ENCODE measurements at regions of chr12 and their contacts with region 1.

Region 1: DNA sequence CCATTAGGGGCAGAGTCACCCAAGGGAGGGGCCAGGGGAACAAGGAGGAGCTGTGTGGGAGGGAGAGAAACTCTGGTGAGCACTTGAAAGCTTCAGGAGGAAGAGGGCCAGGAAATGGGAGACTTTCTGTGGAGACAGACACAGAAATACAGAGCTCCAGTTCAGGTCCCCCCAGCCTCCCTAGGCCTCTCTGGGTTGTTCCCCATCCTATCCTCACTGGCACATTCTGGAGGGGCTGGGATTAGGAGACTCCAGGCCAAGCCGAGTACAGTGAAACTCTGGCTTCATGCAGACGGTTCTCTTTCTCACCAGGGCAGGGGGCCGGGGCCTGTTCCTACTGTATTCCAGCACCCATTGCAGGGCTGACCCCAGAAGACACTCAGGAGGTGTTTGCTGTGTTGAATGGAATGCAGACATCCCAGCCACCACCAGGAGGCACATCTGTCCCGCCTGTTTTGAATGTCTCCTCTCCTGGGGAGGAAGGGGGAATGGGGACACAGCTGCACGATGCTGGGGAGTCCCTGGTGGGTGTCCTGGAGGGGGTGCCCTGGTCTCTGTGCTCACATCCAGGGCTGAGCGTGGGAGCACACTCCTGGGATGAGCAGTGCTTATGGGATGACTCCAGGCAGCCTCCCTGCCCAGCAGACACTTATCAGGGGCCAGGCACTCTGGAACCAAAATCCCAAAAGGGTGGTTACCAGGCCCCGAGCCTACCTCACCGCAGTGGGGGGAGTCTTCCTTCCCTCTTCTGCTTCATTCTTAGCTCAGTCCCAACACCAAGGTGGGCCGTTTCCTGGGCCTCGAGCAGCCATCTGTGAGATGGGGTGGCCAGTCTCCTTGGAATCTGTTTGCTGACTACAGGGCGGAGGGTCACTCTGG is 5.5 kb upstream of the KRT84 start:
- DNase-seq: peak; percentile 58 to 62
- ATAC-seq: peak; percentile 69 to 87
- H3K4me3 ChIP-seq: no peak overlapping the region
- H3K27ac ChIP-seq: peak overlapping the region; percentile 33 to 72; a peak in 5 of 6 replicates
- H3K4me1 ChIP-seq: peaks cover 24% of the 10 kb centered on the region
- CTCF ChIP-seq: peak; percentile 61
- EP300 ChIP-seq: no peak
- POLR2A ChIP-seq: no peak
- RAD21 ChIP-seq: peak; percentile 78 to 80

Region 2: GRCh38 chr12:52404956-52405355 is 14.0 kb after region 1 on chr12:
- CTCF ChIA-PET with region 1: interaction called, 42 read pairs
- POLR2A ChIA-PET with region 1: no interaction called
- DNase-seq: peak in 1 of 2 experiments; percentile 37
- ATAC-seq: peak; percentile 33 to 66; a peak in 3 of 6 replicates
- H3K4me3 ChIP-seq: no peak overlapping the region
- H3K27ac ChIP-seq: no peak overlapping the region
- H3K4me1 ChIP-seq: no peaks in the 10 kb centered on the region
- CTCF ChIP-seq: no peak
- EP300 ChIP-seq: no peak
- POLR2A ChIP-seq: no peak
- RAD21 ChIP-seq: peak in 1 of 2 experiments; percentile 29; a peak in 1 of 5 replicates

Region 3: GRCh38 chr12:52506858-52507715 is 116.1 kb after region 1 on chr12:
- CTCF ChIA-PET with region 1: interaction called, 18 read pairs
- POLR2A ChIA-PET with region 1: no interaction called
- DNase-seq: peak; percentile 61 to 75
- ATAC-seq: peak; percentile 92 to 98; a peak in 5 of 6 replicates
- H3K4me3 ChIP-seq: no peak overlapping the region
- H3K27ac ChIP-seq: no peak overlapping the region
- H3K4me1 ChIP-seq: no peaks in the 10 kb centered on the region
- CTCF ChIP-seq: peak; percentile 65
- EP300 ChIP-seq: no peak
- POLR2A ChIP-seq: no peak
- RAD21 ChIP-seq: peak; percentile 56 to 65

Region 4: GRCh38 chr12:52534487-52534886 is 143.5 kb after region 1 on chr12:
- CTCF ChIA-PET with region 1: interaction called, 12 read pairs
- POLR2A ChIA-PET with region 1: no interaction called
- DNase-seq: peak in 1 of 2 experiments; percentile 39
- ATAC-seq: peak in 1 of 2 experiments; percentile 46; a peak in 2 of 6 replicates
- H3K4me3 ChIP-seq: no peak overlapping the region
- H3K27ac ChIP-seq: no peak overlapping the region
- H3K4me1 ChIP-seq: peaks cover 14% of the 10 kb centered on the region
- CTCF ChIP-seq: peak; percentile 38; the same call in 2 of the 3 replicates
- EP300 ChIP-seq: no peak
- POLR2A ChIP-seq: no peak
- RAD21 ChIP-seq: peak in 1 of 2 experiments; percentile 55; a peak in 3 of 5 replicates

Measured in A549 (cell line).